SK-N-SH (cell line): ENCODE measurements at regions of chr5 and their contacts with region 1.

Region 1: DNA sequence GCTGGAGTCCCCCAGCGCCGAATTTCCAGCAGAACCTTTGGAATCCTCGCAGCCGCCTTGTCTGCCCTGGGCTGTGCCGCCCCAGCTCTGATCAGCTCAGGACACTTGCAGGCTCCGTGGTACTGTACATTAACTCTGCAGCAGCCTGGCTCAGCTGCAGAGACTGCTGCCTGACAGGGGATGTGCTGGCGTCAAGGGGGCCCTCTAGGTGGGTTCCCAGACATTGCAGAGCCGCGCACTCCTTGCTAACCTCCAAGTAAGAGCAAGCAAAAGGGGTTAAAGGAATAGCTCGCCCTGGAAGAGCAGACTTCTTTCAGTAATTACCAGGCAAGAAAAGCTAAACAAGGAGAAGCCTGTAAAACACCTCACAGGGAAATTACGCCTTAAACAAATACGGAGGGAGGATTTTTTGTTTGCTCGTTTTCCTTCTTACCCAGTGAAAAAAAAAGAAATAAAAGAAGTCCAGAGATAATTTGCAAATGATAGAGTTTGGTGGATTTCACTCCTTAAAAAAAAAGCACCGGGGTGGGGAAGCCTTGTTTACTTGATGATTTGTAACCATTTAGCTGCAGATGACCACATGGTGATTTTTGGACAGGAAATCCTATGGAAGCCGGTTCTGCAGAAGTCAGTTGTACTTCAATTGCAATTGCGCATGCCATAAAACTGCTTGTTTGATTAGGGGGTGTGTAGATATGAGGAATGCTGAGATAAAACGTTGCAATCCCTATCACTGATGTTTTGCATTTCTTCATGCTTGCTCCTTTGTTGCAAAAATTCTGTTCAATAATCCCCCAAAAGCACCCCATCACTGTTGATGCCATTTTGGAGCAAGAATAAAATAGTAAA is 305.8 kb downstream of the PDE4D start:
- DNase-seq: peak; percentile 77
- H3K4me3 ChIP-seq: peak overlapping the region; percentile 43 to 60
- H3K27ac ChIP-seq: peak overlapping the region in 1 of 2 experiments; percentile 69; a peak in 1 of 4 replicates
- H3K4me1 ChIP-seq: peaks cover 0 to 16% of the 10 kb centered on the region in 2 experiments; a peak in 3 of 4 replicates
- H3K27me3 ChIP-seq: no peaks in the 10 kb centered on the region
- CTCF ChIP-seq: peak; percentile 29; the same call in 1 of the 2 replicates
- EP300 ChIP-seq: no peak; a peak in 1 of 4 replicates
- RAD21 ChIP-seq: peak; percentile 60

Region 2: DNA sequence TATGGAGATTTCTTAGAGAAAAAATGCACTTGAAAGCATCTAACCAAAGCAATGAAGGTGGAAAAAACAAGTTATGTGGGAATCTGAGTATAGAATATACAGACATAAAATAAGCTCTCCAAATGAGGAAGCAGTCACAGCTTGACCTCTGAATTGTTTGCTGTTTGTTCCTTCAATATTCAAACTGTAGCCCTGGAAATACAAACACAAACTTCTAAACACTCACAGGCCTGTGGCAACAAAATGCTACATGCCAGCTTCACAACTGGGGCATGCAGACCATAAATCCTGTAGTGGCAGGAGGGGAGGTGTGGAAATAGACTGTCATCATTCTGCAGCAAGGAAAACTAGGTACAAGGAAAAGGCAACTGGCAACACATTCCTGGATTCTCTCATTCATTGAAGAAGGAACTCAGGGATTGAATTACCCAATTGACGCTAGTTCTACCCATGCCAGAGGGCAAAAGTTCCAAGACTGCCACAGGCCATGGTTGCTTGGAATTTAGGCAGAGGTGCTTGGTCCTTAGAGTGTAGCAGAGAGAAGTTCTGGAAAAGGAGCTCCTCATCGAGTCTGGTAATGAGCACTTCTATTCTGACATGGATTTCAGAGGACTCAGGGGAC is 43.8 kb before region 1 on chr5:
- CTCF ChIA-PET with region 1: interaction called, 10 read pairs
- POLR2A ChIA-PET with region 1: no interaction called
- DNase-seq: no peak
- H3K4me3 ChIP-seq: no peak overlapping the region
- H3K27ac ChIP-seq: peak overlapping the region in 1 of 2 experiments; percentile 81; a peak in 2 of 4 replicates
- H3K4me1 ChIP-seq: peaks cover 0 to 27% of the 10 kb centered on the region in 2 experiments; a peak in 2 of 4 replicates
- H3K27me3 ChIP-seq: no peaks in the 10 kb centered on the region
- CTCF ChIP-seq: no peak
- EP300 ChIP-seq: no peak
- RAD21 ChIP-seq: no peak

Region 3: DNA sequence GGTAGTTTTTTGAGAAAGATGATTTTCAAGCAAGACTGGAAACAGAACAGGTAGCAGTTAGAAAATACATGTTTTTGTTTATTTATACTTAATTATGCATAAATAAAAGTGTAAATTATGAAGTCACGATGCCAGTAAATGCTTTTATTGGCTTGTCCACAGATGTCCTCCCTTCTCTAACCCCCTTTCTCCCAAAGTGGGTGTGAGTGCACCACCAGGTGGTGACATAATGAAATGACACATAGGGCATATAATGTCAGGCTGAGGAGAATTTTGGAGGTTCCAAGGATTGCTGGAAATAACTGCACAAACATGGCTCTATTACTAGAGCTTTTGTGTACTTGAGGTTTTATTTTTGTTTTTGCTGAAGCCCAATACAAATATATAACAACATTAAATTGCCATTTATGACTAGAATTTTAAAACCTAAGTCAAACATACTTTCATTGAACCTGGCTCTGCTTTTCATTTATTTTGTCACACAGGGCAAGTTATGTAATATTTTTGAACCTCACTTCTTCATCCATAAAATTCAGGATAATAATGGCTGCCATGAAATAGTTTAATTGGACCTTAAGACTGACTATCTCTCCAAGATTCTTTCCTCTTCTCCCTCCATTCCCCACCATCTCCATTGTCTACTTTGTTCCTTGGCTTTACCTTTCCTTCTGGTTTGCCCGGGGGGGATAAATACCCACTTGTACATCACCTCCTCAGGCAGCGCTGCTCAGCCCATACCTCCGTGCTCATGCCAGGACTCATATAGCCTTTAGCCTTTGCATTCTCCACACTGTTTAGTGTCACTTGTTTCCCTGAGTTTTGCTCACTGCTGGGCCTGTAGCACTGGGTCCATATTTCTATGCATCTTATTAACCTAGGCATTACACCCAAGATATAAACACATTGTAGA is 137.0 kb after region 1 on chr5:
- CTCF ChIA-PET with region 1: no interaction called
- POLR2A ChIA-PET with region 1: no interaction called
- DNase-seq: peak; percentile 41
- H3K4me3 ChIP-seq: no peak overlapping the region
- H3K27ac ChIP-seq: no peak overlapping the region
- H3K4me1 ChIP-seq: peaks cover 0 to 3% of the 10 kb centered on the region in 2 experiments; a peak in 2 of 4 replicates
- H3K27me3 ChIP-seq: no peaks in the 10 kb centered on the region
- CTCF ChIP-seq: peak; percentile 74
- EP300 ChIP-seq: no peak
- RAD21 ChIP-seq: peak; percentile 72